ENCODE measurements at regions of chr3 and their contacts with region 1.

Region 1: DNA sequence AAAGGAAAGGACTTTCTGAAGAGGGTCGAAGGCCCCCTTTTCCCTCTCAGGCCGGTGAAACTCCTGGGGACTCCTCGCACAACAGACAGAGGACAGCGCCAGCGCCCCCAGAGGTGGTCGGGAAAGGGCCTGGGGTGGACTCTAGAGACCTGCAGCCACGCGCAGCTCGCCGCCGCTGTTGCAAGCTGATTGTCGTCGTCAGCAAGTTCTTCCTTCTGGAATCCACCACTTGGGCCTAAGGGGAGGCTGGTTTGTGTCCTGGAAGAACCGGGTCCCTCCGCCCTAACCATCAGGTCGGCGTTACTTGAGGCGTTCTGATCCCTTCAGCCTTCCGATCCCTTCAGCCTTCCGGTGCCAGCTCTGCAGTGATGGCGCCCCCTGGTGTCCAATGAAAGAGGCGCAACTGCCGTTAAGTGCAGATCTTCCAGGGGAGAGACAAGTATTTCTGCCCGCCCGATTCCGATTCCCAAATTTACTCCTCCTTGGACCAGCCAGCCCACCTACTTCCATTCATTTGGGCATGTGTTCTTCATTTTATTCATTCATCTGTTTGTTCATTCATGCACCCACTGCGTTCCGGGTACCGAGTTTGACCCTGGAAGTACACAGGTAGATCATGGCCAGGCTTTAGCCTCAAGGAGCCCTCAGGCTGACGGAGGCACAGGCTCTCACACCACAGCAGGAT is 77.2 kb upstream of the SLC6A11 start:
- DNase-seq: peak; percentile 49 to 73 (median 62)
- H3K4me3 ChIP-seq: no peak overlapping the region
- H3K4me3 Mint-ChIP-seq: peak overlapping the region in 6 of 7 donors; percentile 8 to 76 (median 60)
- H3K27ac ChIP-seq: no peak overlapping the region
- H3K27ac Mint-ChIP-seq: no peak overlapping the region
- H3K4me1 ChIP-seq: peaks cover 4% of the 10 kb centered on the region
- H3K4me1 Mint-ChIP-seq: peaks cover 11 to 13% (median 12%) of the 10 kb centered on the region in 3 donors
- H3K27me3 ChIP-seq: peaks cover 10% of the 10 kb centered on the region
- H3K27me3 Mint-ChIP-seq: peaks cover 21 to 72% of the 10 kb centered on the region in 2 donors

Region 2: DNA sequence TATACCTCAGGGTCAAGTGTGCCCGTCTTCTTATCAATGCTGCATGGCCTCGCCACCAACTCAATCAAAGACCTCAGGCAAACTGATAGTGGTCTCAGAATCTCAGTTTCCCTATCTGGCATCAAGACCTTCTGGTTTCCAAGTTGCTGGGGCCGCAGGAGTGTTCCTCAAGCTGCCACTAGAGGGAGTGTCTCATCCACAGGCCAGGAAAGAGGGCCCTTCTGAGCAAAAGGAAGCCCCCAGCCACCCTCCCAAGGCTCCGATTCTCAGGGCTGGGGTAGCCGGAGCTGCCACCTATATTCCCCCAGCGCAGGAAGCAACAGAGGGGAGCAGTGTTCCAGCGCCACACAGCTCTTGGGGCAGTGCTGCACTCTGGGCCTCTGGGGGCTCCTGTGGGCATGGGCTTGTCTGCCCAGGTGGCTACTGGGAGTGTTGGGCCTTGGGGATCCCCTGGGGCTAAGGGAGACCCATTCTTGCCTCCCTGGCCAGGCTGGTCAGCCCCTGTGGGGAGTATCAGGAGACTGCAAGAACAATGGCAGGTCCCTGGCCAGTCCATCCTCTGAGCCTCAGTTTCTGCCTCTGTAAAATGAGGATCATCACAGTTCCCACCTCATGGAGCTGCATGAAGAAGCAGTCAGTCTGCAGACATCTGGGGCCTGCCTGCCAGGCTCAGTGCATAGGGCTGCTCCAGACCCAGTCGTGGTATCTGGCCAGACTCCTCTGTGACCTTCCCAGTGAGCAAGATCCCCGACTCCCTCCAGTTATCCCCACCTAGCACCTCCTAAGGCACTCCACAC is 394.5 kb before region 1 on chr3:
- CTCF ChIA-PET with region 1: interaction called, 52 read pairs
- POLR2A ChIA-PET with region 1: no interaction called
- DNase-seq: peak; percentile 22 to 71 (median 38)
- H3K4me3 ChIP-seq: no peak overlapping the region
- H3K4me3 Mint-ChIP-seq: no peak overlapping the region
- H3K27ac ChIP-seq: no peak overlapping the region
- H3K27ac Mint-ChIP-seq: no peak overlapping the region
- H3K4me1 ChIP-seq: no peaks in the 10 kb centered on the region
- H3K4me1 Mint-ChIP-seq: no peaks in the 10 kb centered on the region
- H3K27me3 ChIP-seq: no peaks in the 10 kb centered on the region
- H3K27me3 Mint-ChIP-seq: peaks cover 3 to 4% of the 10 kb centered on the region in 2 donors

Region 3: GRCh38 chr3:10417849-10418248 is 321.0 kb before region 1 on chr3:
- CTCF ChIA-PET with region 1: interaction called, 11 read pairs
- POLR2A ChIA-PET with region 1: no interaction called
- DNase-seq: no peak
- H3K4me3 ChIP-seq: no peak overlapping the region
- H3K4me3 Mint-ChIP-seq: no peak overlapping the region
- H3K27ac ChIP-seq: no peak overlapping the region
- H3K27ac Mint-ChIP-seq: no peak overlapping the region
- H3K4me1 ChIP-seq: peaks cover 8% of the 10 kb centered on the region
- H3K4me1 Mint-ChIP-seq: peaks cover 0 to 5% (median 1%) of the 10 kb centered on the region in 3 donors
- H3K27me3 ChIP-seq: no peaks in the 10 kb centered on the region
- H3K27me3 Mint-ChIP-seq: peaks cover 4 to 24% of the 10 kb centered on the region in 2 donors

Region 4: GRCh38 chr3:10505050-10505790 is 233.6 kb before region 1 on chr3 and contains the start of gene ATP2B2:
- CTCF ChIA-PET with region 1: no interaction called
- POLR2A ChIA-PET with region 1: no interaction called
- DNase-seq: no peak
- H3K4me3 ChIP-seq: no peak within 1 kb of the TSS
- H3K4me3 Mint-ChIP-seq: peak within 1 kb of the TSS in 6 of 7 donors; percentile 43 to 74 (median 60)
- H3K27ac ChIP-seq: no peak within 1 kb of the TSS
- H3K27ac Mint-ChIP-seq: no peak within 1 kb of the TSS
- H3K4me1 ChIP-seq: no peaks in the 10 kb centered on the region
- H3K4me1 Mint-ChIP-seq: peaks cover 0 to 6% (median 0%) of the 10 kb centered on the region in 3 donors
- H3K27me3 ChIP-seq: peaks cover 7% of the 10 kb centered on the region
- H3K27me3 Mint-ChIP-seq: peaks cover 18 to 24% of the 10 kb centered on the region in 2 donors
- total RNA-seq, gene ATP2B2: not detected

Region 5: GRCh38 chr3:10722911-10723310 is 15.9 kb before region 1 on chr3:
- CTCF ChIA-PET with region 1: no interaction called
- POLR2A ChIA-PET with region 1: no interaction called
- DNase-seq: no peak
- H3K4me3 ChIP-seq: no peak overlapping the region
- H3K4me3 Mint-ChIP-seq: no peak overlapping the region
- H3K27ac ChIP-seq: no peak overlapping the region
- H3K27ac Mint-ChIP-seq: no peak overlapping the region
- H3K4me1 ChIP-seq: no peaks in the 10 kb centered on the region
- H3K4me1 Mint-ChIP-seq: no peaks in the 10 kb centered on the region
- H3K27me3 ChIP-seq: no peaks in the 10 kb centered on the region
- H3K27me3 Mint-ChIP-seq: peaks cover 10 to 25% of the 10 kb centered on the region in 2 donors

Region 6: DNA sequence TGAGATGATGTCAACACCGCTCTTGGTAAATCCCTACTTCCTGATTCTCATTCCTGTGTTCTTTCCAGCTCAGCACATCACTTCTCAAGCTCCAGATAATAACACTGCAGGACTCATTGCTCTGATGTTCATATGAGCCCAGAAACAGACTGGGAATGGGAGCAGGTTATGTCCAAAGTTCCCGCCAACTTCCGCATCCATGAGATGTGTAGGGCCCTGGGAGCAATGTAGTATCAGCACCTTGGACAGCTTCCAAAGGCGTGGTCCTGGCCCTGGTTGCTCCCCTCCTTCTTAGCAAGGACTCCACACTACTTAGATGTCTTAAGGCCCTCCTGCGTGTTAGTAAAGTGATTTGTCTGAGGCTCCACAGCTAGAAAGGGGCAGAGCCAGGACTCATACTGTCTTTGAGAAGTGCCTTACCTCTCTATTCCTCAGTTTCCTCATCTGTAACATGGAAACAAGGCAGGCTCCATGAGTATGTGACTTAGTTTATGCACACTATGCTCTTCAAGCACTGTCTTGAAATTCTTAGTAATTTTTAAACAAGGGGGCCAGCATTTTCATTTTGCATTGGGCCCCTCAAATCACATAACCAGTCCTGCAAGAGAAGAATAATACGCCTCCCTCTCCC is 225.8 kb after region 1 on chr3:
- CTCF ChIA-PET with region 1: no interaction called
- POLR2A ChIA-PET with region 1: no interaction called
- DNase-seq: no peak
- H3K4me3 ChIP-seq: no peak overlapping the region
- H3K4me3 Mint-ChIP-seq: no peak overlapping the region
- H3K27ac ChIP-seq: no peak overlapping the region
- H3K27ac Mint-ChIP-seq: no peak overlapping the region
- H3K4me1 ChIP-seq: no peaks in the 10 kb centered on the region
- H3K4me1 Mint-ChIP-seq: no peaks in the 10 kb centered on the region
- H3K27me3 ChIP-seq: no peaks in the 10 kb centered on the region
- H3K27me3 Mint-ChIP-seq: peaks cover 0 to 35% of the 10 kb centered on the region in 2 donors